ENCODE measurements at regions of chr1 and their contacts with region 1.

Region 1: GRCh38 chr1:40612345-40612831 is 53.1 kb downstream of the RIMS3 start:
- DNase-seq: peak; percentile 80
- H3K4me3 ChIP-seq: no peak overlapping the region
- H3K27ac ChIP-seq: no peak overlapping the region
- H3K4me1 ChIP-seq: peaks cover 0 to 9% (median 2%) of the 10 kb centered on the region in 4 donors
- H3K27me3 ChIP-seq: no peaks in the 10 kb centered on the region
- CTCF ChIP-seq: peak; percentile 76 to 81 (median 79)
- EP300 ChIP-seq: no peak
- POLR2A ChIP-seq: no peak

Region 2: GRCh38 chr1:40432644-40433390 is 179.6 kb before region 1 on chr1:
- in situ Hi-C with region 1: no loop called
- intact Hi-C with region 1: no loop called
- DNase-seq: no peak
- H3K4me3 ChIP-seq: no peak overlapping the region
- H3K27ac ChIP-seq: no peak overlapping the region
- H3K4me1 ChIP-seq: no peaks in the 10 kb centered on the region
- H3K27me3 ChIP-seq: no peaks in the 10 kb centered on the region
- CTCF ChIP-seq: no peak
- EP300 ChIP-seq: no peak
- POLR2A ChIP-seq: no peak

Region 3: DNA sequence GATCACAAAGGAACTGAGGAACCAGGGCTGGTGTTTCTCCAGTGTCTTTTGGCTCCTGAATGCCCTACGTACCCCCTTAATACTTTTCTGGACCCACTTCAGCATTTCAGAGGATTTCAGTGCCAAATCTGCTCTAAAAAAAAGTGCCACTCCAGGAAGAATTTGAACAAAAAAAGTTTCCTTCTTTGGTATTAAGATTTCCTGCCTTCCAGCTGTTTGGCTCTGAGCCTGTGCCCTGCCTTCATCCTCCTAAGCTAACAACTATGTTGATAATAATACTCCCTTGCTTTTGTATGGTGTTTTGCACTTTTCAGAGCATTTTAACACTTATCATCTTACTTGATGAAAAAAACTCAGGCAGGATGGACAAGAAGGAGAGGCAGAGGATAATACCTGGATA is 64.1 kb after region 1 on chr1:
- in situ Hi-C with region 1: loop called in 1 of 4 experiments (anchors 10 kb)
- intact Hi-C with region 1: no loop called
- DNase-seq: no peak
- H3K4me3 ChIP-seq: no peak overlapping the region
- H3K27ac ChIP-seq: no peak overlapping the region
- H3K4me1 ChIP-seq: no peaks in the 10 kb centered on the region
- H3K27me3 ChIP-seq: no peaks in the 10 kb centered on the region
- CTCF ChIP-seq: no peak
- EP300 ChIP-seq: no peak
- POLR2A ChIP-seq: no peak

Region 4: GRCh38 chr1:40951943-40952743 is 339.8 kb after region 1 on chr1:
- in situ Hi-C with region 1: loop called in 2 of 4 experiments (anchors 10 to 25 kb)
- intact Hi-C with region 1: no loop called
- DNase-seq: peak; percentile 77
- H3K4me3 ChIP-seq: no peak overlapping the region
- H3K27ac ChIP-seq: no peak overlapping the region
- H3K4me1 ChIP-seq: peaks cover 4 to 15% (median 8%) of the 10 kb centered on the region in 4 donors
- H3K27me3 ChIP-seq: peaks cover 3% of the 10 kb centered on the region
- CTCF ChIP-seq: peak; percentile 86 to 92 (median 89)
- EP300 ChIP-seq: no peak
- POLR2A ChIP-seq: no peak

Measured in transverse colon (tissue), 4 donors.